ENCODE measurements at regions of chr1 and their contacts with region 1.

Region 1: GRCh38 chr1:184036517-184036949 is 995 bp downstream of the COLGALT2 start:
- DNase-seq: peak; percentile 51 to 62
- H3K4me3 ChIP-seq: peak overlapping the region; percentile 82
- H3K4me3 Mint-ChIP-seq: peak overlapping the region; percentile 86
- H3K27ac Mint-ChIP-seq: no peak overlapping the region
- H3K4me1 ChIP-seq: peaks cover 15% of the 10 kb centered on the region; the same call in 1 of the 2 replicates
- H3K4me1 Mint-ChIP-seq: peaks cover 26% of the 10 kb centered on the region
- H3K27me3 ChIP-seq: no peaks in the 10 kb centered on the region
- H3K27me3 Mint-ChIP-seq: peaks cover 5% of the 10 kb centered on the region
- CTCF ChIP-seq: no peak

Region 2: GRCh38 chr1:183180634-183181056 is 855.9 kb before region 1 on chr1:
- CTCF ChIA-PET with region 1: no interaction called
- POLR2A ChIA-PET with region 1: no interaction called
- intact Hi-C with region 1: no loop called
- DNase-seq: peak; percentile 53 to 76
- H3K4me3 ChIP-seq: no peak overlapping the region
- H3K4me3 Mint-ChIP-seq: peak overlapping the region; percentile 14
- H3K27ac Mint-ChIP-seq: peak overlapping the region; percentile 30
- H3K4me1 ChIP-seq: peaks cover 56% of the 10 kb centered on the region
- H3K4me1 Mint-ChIP-seq: peaks cover 36% of the 10 kb centered on the region
- H3K27me3 ChIP-seq: no peaks in the 10 kb centered on the region
- H3K27me3 Mint-ChIP-seq: no peaks in the 10 kb centered on the region
- CTCF ChIP-seq: no peak

Region 3: GRCh38 chr1:183515018-183515689 is 521.4 kb before region 1 on chr1:
- CTCF ChIA-PET with region 1: no interaction called
- POLR2A ChIA-PET with region 1: interaction called, 12 read pairs
- intact Hi-C with region 1: no loop called
- DNase-seq: no peak
- H3K4me3 ChIP-seq: no peak overlapping the region
- H3K4me3 Mint-ChIP-seq: no peak overlapping the region
- H3K27ac Mint-ChIP-seq: no peak overlapping the region
- H3K4me1 ChIP-seq: peaks cover 20% of the 10 kb centered on the region
- H3K4me1 Mint-ChIP-seq: peaks cover 25% of the 10 kb centered on the region
- H3K27me3 ChIP-seq: no peaks in the 10 kb centered on the region
- H3K27me3 Mint-ChIP-seq: no peaks in the 10 kb centered on the region
- CTCF ChIP-seq: no peak

Region 4: DNA sequence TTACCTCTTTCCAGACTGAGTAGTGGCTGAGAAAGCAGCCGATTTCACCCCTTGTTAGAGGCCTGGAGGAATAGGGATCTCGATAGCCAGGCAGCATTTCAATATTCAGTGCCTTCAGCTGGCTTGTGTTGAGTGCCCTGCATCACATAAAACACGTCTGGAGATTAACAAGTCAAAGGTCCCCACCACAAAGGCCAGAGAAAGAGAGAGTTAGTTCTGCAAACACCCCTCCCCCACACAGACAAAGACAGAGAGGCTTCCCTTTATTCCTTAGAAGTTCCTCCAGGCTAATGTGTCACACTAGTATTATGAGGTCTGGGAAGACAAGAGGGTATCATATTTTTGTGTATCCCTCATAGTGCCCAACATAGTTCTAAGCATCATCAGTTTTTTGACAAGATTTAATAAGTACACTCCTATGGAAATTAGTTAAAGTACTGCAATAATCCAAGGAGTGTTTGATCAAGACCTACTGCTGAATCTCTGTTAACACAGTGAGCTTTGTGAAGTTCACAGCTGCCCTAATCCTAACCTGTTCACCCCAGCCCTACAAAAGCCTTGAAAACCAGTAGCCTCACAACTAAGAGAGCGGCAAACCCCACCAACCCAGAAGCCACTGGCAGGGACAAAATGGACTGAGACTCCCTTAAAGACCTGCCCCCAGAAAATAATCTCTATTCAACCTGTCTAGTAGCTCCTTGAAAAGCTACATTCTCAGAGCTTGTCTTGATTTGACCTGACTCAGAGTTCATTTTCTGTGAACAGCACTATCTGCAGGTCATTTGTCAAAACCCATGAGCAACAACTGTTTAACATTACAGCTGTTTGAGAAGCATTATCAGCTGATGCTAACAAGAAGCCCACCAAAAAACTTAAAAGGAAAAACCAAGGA is 90.9 kb before region 1 on chr1:
- CTCF ChIA-PET with region 1: no interaction called
- POLR2A ChIA-PET with region 1: no interaction called
- intact Hi-C with region 1: loop called (anchors 5 kb)
- DNase-seq: peak; percentile 56 to 65
- H3K4me3 ChIP-seq: no peak overlapping the region
- H3K4me3 Mint-ChIP-seq: peak overlapping the region; percentile 12
- H3K27ac Mint-ChIP-seq: peak overlapping the region; percentile 68
- H3K4me1 ChIP-seq: peaks cover 20% of the 10 kb centered on the region
- H3K4me1 Mint-ChIP-seq: peaks cover 28% of the 10 kb centered on the region
- H3K27me3 ChIP-seq: no peaks in the 10 kb centered on the region
- H3K27me3 Mint-ChIP-seq: no peaks in the 10 kb centered on the region
- CTCF ChIP-seq: no peak

Region 5: DNA sequence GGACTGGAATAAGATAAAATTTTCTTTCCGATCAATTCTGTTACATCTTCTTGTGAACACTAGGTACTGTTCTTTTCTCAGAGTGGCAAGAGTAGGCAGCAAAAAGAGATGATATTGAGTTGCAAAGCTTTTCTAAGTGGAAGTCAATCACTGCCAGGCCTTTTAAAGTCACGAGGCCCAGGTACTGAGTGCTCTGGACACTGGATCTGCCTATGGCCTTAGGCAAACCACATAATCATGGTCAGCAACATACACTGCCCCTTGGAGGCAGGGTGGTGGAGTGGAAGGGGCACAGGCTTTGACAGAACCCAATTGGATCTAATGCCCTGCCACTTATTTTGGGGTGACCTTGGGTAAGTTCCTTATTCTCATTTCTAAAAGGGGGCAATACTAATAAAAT is 56.5 kb after region 1 on chr1:
- CTCF ChIA-PET with region 1: no interaction called
- POLR2A ChIA-PET with region 1: no interaction called
- intact Hi-C with region 1: no loop called
- DNase-seq: no peak
- H3K4me3 ChIP-seq: no peak overlapping the region
- H3K4me3 Mint-ChIP-seq: no peak overlapping the region
- H3K27ac Mint-ChIP-seq: no peak overlapping the region
- H3K4me1 ChIP-seq: no peaks in the 10 kb centered on the region
- H3K4me1 Mint-ChIP-seq: no peaks in the 10 kb centered on the region
- H3K27me3 ChIP-seq: no peaks in the 10 kb centered on the region
- H3K27me3 Mint-ChIP-seq: no peaks in the 10 kb centered on the region
- CTCF ChIP-seq: no peak

Measured in Caco-2 (cell line).